ENCODE measurements at regions of chr16 and their contacts with region 1.

Region 1: GRCh38 chr16:57757326-57757786 is 21.8 kb downstream of the KATNB1 start:
- DNase-seq: peak; percentile 37
- H3K4me3 ChIP-seq: no peak overlapping the region
- H3K27ac ChIP-seq: no peak overlapping the region
- H3K27me3 ChIP-seq: no peaks in the 10 kb centered on the region
- CTCF ChIP-seq: peak; percentile 95

Region 2: GRCh38 chr16:57745768-57746167 is 11.6 kb before region 1 on chr16:
- CTCF ChIA-PET with region 1: interaction called, 10 read pairs
- POLR2A ChIA-PET with region 1: no interaction called
- DNase-seq: no peak
- H3K4me3 ChIP-seq: no peak overlapping the region
- H3K27ac ChIP-seq: no peak overlapping the region
- H3K27me3 ChIP-seq: no peaks in the 10 kb centered on the region
- CTCF ChIP-seq: no peak

Measured in AG04450 (cell line).